ENCODE measurements at regions of chr6 and their contacts with region 1.

Region 1: DNA sequence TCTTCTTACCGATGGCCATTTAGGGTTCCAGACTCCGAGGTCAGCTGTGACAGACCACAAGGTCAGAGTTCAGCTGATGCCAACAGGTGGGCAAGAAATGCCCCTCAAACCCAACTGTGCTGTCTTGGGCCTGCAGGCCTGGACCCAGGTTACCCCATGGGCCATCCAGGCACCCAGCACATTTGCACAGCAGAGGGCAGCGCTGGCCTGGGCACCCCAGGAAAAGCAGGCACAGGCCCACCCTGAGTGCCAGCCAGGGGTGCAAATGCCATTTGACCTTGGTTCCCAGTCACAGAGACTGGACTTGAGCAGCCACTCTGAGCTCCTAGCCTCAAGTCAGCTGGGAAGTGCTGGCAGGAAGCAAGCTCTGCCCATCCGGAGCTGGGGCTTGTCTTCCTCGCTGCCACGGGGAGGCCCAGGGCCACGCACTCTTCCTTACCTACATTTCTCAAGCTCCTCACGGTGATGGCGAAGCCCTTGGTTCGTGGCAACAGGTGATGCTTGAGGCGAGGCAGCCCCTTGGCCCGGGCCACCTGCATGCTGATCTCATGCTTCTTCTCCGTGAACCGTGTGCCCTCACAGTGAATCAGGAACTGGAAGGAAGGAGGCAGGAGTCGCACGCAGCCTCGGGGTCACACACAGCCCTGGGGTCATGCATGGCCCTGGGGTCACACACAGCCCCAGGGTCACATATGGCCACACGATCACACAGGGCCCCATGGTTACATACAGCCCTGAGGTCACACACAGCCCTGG is 120.8 kb downstream of the AGPAT4 start:
- DNase-seq: peak in 1 of 4 experiments; percentile 50
- ATAC-seq: peak; percentile 57
- H3K4me3 ChIP-seq: no peak overlapping the region
- H3K27ac ChIP-seq: no peak overlapping the region
- H3K4me1 ChIP-seq: peaks cover 12 to 40% of the 10 kb centered on the region in 2 experiments; a peak in 4 of 5 replicates
- H3K27me3 ChIP-seq: peaks cover 0 to 5% of the 10 kb centered on the region in 2 experiments; a peak in 1 of 5 replicates
- CTCF ChIP-seq: peak; percentile 56 to 67 (median 65)
- EP300 ChIP-seq: no peak
- POLR2A ChIP-seq: no peak
- RAD21 ChIP-seq: peak; percentile 68 to 86

Region 2: GRCh38 chr6:160733050-160733646 is 419.9 kb before region 1 on chr6:
- CTCF ChIA-PET with region 1: no interaction called
- POLR2A ChIA-PET with region 1: no interaction called
- in situ Hi-C with region 1: no loop called
- intact Hi-C with region 1: loop called (anchors 5 kb)
- DNase-seq: peak; percentile 43 to 79 (median 50)
- ATAC-seq: peak; percentile 94
- H3K4me3 ChIP-seq: no peak overlapping the region
- H3K27ac ChIP-seq: no peak overlapping the region
- H3K4me1 ChIP-seq: no peaks in the 10 kb centered on the region
- H3K27me3 ChIP-seq: no peaks in the 10 kb centered on the region
- CTCF ChIP-seq: peak; percentile 74 to 91 (median 86)
- EP300 ChIP-seq: no peak
- POLR2A ChIP-seq: no peak
- RAD21 ChIP-seq: peak; percentile 58 to 82

Region 3: DNA sequence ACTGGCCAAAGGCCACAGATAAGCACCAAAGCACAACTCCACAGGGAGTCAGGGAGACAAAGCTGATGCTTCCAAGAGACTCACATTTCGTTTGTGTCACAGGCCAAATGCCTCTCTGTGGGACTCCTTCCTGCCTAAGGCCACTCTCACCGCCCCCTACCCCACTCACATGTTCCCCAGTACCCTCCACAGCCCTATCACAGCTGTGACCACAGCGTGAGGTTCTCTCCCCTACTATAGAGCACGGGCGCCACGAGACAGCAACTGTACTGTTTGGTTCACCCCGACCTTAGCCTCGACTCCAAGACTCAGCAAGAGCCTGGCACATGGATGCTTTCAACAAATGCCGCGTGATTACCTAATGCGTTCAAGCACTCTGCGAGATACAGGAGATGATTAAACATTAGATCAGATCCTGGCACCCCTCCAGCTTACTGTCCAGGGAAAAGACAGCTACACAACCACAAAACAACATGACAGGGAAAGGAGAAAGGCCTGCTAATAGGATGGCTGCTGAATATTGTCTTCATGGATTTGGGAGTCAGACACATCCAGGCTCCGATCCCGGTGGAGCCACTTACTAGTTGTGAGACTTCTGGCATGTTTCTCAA is 15.3 kb after region 1 on chr6:
- CTCF ChIA-PET with region 1: no interaction called
- POLR2A ChIA-PET with region 1: interaction called, 10 read pairs
- in situ Hi-C with region 1: no loop called
- intact Hi-C with region 1: no loop called
- DNase-seq: peak in 1 of 4 experiments; percentile 33
- ATAC-seq: no peak
- H3K4me3 ChIP-seq: no peak overlapping the region
- H3K27ac ChIP-seq: no peak overlapping the region
- H3K4me1 ChIP-seq: peaks cover 21 to 27% of the 10 kb centered on the region in 2 experiments; a peak in 4 of 5 replicates
- H3K27me3 ChIP-seq: 0 out of 5 replicates have a peak, but pooled peaks cover 0 to 10% of the 10 kb centered on the region in 2 experiments
- CTCF ChIP-seq: no peak
- EP300 ChIP-seq: no peak
- POLR2A ChIP-seq: no peak
- RAD21 ChIP-seq: no peak

Region 4: DNA sequence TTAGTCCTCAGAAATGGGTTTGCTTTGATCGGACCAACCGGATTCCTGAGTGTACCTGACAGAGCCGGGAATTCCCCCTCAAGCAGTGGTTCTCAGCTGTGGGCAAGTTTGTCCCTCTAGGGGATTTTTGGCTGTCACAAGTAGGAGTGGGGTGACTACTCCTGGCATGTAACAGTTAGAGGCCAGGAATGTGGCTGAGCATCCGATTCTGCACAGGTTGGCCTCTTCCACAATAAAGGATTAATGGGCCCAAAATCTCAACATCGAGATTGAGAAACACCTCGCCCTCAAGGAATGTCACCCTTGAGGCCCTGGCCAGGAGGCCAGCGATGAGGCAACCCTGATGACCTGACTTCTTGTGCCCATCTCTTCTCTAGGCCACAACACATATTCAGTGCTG is 112.9 kb after region 1 on chr6:
- CTCF ChIA-PET with region 1: no interaction called
- POLR2A ChIA-PET with region 1: no interaction called
- in situ Hi-C with region 1: no loop called
- intact Hi-C with region 1: loop called (anchors 5 kb)
- DNase-seq: no peak
- ATAC-seq: no peak
- H3K4me3 ChIP-seq: no peak overlapping the region
- H3K27ac ChIP-seq: no peak overlapping the region
- H3K4me1 ChIP-seq: peaks cover 37 to 41% of the 10 kb centered on the region in 2 experiments
- H3K27me3 ChIP-seq: no peaks in the 10 kb centered on the region
- CTCF ChIP-seq: no peak
- EP300 ChIP-seq: no peak
- POLR2A ChIP-seq: no peak
- RAD21 ChIP-seq: no peak

Region 5: DNA sequence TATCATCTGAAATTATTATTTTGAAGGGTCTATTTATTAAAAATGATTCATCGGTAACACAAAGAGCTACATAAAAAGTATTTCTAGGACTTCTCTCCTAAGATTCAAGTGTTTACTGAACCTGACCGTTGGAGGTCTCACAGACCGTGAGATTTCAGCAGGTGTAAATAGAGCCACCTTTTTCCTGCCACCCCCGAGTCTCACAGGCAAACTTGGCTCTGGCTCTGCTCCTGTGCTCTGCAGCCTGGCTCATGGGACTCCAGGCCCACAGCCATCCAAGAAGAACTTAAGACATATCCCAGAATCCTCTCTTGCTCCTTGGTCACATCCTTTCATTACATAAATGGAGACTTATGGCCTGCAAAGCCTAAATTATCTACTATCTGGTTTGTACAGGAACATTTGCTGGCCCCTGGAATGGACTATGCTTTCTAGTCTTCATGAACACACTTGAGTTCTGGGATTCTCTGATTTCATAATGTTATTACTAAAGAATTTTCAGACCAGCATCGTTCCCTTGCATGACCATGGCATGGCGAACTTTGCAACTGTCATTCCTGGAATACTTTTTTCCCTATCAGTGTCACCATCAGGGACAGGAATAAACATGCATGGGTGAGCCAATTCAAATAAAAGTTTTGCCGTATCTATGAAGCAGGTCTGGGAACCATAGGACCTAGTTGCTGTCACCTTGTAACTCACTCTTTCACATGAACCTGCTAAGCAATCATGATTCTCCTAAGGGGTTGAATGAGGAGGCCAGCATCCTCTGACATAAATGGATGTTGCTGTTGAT is 188.8 kb after region 1 on chr6:
- CTCF ChIA-PET with region 1: no interaction called
- POLR2A ChIA-PET with region 1: no interaction called
- in situ Hi-C with region 1: no loop called
- intact Hi-C with region 1: no loop called
- DNase-seq: no peak
- ATAC-seq: no peak
- H3K4me3 ChIP-seq: no peak overlapping the region
- H3K27ac ChIP-seq: no peak overlapping the region
- H3K4me1 ChIP-seq: peaks cover 0 to 3% of the 10 kb centered on the region in 2 experiments; a peak in 1 of 5 replicates
- H3K27me3 ChIP-seq: no peaks in the 10 kb centered on the region; a peak in 1 of 5 replicates
- CTCF ChIP-seq: no peak
- EP300 ChIP-seq: no peak
- POLR2A ChIP-seq: no peak
- RAD21 ChIP-seq: no peak

Region 6: DNA sequence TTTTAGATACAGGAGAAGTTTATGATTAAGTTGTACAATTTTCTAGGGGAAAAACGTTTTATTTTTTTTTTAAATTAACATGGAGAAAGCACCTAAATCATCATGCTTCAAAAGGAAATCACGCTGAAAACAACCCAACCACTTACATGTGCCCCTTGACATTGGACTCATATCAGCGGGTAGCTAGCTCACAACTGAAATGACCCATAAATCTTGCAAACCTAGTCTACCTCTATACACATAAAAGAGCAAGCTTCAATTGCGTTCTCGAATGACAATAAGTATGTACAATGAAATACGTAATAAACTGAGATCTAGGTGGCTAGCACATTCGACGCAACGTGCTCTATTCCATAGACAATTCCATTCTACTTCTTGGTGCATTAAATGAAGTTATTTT is 843.7 kb after region 1 on chr6:
- CTCF ChIA-PET with region 1: no interaction called
- POLR2A ChIA-PET with region 1: no interaction called
- in situ Hi-C with region 1: no loop called
- intact Hi-C with region 1: no loop called
- DNase-seq: no peak
- ATAC-seq: no peak
- H3K4me3 ChIP-seq: no peak overlapping the region
- H3K27ac ChIP-seq: no peak overlapping the region
- H3K4me1 ChIP-seq: no peaks in the 10 kb centered on the region
- H3K27me3 ChIP-seq: no peaks in the 10 kb centered on the region
- CTCF ChIP-seq: no peak
- EP300 ChIP-seq: no peak
- POLR2A ChIP-seq: no peak
- RAD21 ChIP-seq: no peak